ENCODE measurements at regions of chr15 and their contacts with region 1.

Region 1: DNA sequence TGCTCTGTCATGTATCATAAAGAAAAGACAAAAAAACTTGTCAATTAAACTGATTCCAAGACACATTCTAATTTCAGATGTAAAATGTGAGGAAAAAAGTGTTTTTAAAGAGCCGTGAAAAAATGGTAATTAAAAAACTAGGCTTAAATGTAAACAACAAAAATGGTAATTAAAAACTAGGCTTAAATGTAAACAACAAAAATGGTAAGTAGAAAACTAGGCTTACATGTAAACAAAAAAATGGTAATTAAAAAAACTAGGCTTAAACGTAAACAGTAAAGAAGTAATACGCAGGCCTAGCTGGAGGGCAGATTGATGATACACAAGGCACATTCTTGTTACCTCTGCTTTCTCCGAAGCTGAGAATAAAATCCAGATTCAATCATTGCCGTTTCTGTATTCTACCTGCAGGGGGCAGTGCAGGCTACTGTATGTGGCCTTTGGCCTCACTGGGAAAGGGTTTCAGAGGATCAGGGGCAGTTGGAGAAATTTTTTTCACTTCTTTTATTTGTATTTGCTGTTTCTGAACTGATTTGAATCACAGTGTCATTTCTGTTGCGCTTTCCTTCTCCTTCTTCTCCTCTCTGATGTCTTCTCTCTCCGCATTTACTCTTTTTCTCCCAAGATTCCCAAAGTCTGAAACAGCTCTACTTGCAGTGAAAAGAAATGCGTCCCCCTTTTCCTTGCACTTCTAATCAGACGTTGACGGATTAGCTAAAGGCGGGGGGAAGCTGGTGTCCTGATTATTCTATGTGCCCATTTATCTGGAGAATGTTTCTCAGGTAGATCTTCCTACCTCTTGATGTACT is 67.2 kb upstream of the MCTP2 start:
- DNase-seq: no peak
- H3K4me3 ChIP-seq: no peak overlapping the region
- H3K27ac ChIP-seq: no peak overlapping the region
- H3K4me1 ChIP-seq: peaks cover 0 to 10% (median 0%) of the 10 kb centered on the region in 6 donors
- H3K27me3 ChIP-seq: no peaks in the 10 kb centered on the region
- CTCF ChIP-seq: peak; percentile 70 to 90 (median 86)
- POLR2A ChIP-seq: no peak

Region 2: DNA sequence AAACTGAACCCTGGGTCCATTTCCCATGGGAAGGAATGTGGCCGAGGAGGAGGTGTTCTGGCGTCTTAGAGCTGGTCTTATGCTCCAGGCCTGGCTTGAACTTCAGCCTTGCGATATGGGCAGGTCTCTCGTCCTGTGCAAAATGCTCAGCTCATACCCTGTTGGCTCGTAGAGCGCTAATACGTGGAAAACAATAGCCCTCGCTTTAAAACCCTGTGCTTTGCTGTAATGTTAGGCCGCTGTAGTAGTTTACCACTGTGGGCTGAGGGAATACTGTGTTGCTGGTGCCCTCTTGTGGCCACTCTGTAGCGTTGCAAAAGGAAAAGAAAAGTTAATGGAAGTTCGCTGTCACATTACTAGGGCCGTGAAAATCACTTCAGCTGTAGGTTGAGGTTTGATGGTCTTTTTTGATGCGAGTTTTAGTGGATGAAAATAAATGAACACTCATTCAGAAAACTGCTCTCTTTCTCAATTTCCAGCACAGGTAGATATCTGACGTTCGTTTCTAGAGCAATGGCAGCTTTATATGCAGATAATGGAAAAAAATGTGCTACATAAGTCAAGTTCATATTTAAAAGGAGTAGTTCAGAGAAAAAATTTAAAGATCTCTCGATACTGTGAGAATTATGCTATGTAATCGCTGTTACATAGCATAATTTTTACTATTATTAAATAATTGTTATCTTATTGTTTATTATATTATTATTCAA is 160.1 kb after region 1 on chr15:
- intact Hi-C with region 1: loop called (anchors 2 kb)
- DNase-seq: no peak
- H3K4me3 ChIP-seq: no peak overlapping the region
- H3K27ac ChIP-seq: peak overlapping the region in 3 of 8 donors; percentile 1 to 31 (median 12)
- H3K4me1 ChIP-seq: peaks cover 0 to 54% (median 28%) of the 10 kb centered on the region in 6 donors
- H3K27me3 ChIP-seq: no peaks in the 10 kb centered on the region
- CTCF ChIP-seq: peak; percentile 83 to 96 (median 91)
- POLR2A ChIP-seq: no peak

Region 3: GRCh38 chr15:94467034-94467433 is 302.8 kb after region 1 on chr15:
- intact Hi-C with region 1: no loop called
- DNase-seq: no peak
- H3K4me3 ChIP-seq: no peak overlapping the region
- H3K27ac ChIP-seq: no peak overlapping the region
- H3K4me1 ChIP-seq: no peaks in the 10 kb centered on the region
- H3K27me3 ChIP-seq: no peaks in the 10 kb centered on the region
- CTCF ChIP-seq: no peak
- POLR2A ChIP-seq: no peak